IMR-90 (cell line): ENCODE measurements at regions of chr2 and their contacts with region 1.

Region 1: GRCh38 chr2:238370823-238371372 is 50.6 kb downstream of the TRAF3IP1 start:
- DNase-seq: peak; percentile 67
- ATAC-seq: peak; percentile 98
- H3K4me3 ChIP-seq: no peak overlapping the region
- H3K27ac ChIP-seq: no peak overlapping the region
- H3K4me1 ChIP-seq: no peaks in the 10 kb centered on the region
- H3K27me3 ChIP-seq: no peaks in the 10 kb centered on the region
- CTCF ChIP-seq: peak; percentile 96
- POLR2A ChIP-seq: peak; percentile 42; the same call in 1 of the 2 replicates
- RAD21 ChIP-seq: peak; percentile 97

Region 2: GRCh38 chr2:238462782-238463396 is 92.0 kb after region 1 on chr2:
- CTCF ChIA-PET with region 1: interaction called, 5 read pairs
- POLR2A ChIA-PET with region 1: no interaction called
- dilution Hi-C with region 1: no loop called
- in situ Hi-C with region 1: loop called (anchors 10 kb)
- intact Hi-C with region 1: loop called (anchors 2 kb)
- DNase-seq: peak; percentile 58
- ATAC-seq: peak; percentile 59; the same call in 1 of the 2 replicates
- H3K4me3 ChIP-seq: no peak overlapping the region
- H3K27ac ChIP-seq: no peak overlapping the region
- H3K4me1 ChIP-seq: peaks cover 7% of the 10 kb centered on the region
- H3K27me3 ChIP-seq: no peaks in the 10 kb centered on the region
- CTCF ChIP-seq: peak; percentile 76
- POLR2A ChIP-seq: no peak
- RAD21 ChIP-seq: peak; percentile 72

Region 3: GRCh38 chr2:238720232-238720672 is 349.4 kb after region 1 on chr2:
- CTCF ChIA-PET with region 1: no interaction called
- POLR2A ChIA-PET with region 1: interaction called, 3 read pairs
- dilution Hi-C with region 1: no loop called
- in situ Hi-C with region 1: no loop called
- intact Hi-C with region 1: loop called (anchors 10 kb)
- DNase-seq: peak; percentile 19
- ATAC-seq: peak; percentile 56; the same call in 1 of the 2 replicates
- H3K4me3 ChIP-seq: no peak overlapping the region
- H3K27ac ChIP-seq: no peak overlapping the region
- H3K4me1 ChIP-seq: no peaks in the 10 kb centered on the region
- H3K27me3 ChIP-seq: peaks cover 12% of the 10 kb centered on the region
- CTCF ChIP-seq: peak; percentile 46
- POLR2A ChIP-seq: no peak
- RAD21 ChIP-seq: peak; percentile 40

Region 4: DNA sequence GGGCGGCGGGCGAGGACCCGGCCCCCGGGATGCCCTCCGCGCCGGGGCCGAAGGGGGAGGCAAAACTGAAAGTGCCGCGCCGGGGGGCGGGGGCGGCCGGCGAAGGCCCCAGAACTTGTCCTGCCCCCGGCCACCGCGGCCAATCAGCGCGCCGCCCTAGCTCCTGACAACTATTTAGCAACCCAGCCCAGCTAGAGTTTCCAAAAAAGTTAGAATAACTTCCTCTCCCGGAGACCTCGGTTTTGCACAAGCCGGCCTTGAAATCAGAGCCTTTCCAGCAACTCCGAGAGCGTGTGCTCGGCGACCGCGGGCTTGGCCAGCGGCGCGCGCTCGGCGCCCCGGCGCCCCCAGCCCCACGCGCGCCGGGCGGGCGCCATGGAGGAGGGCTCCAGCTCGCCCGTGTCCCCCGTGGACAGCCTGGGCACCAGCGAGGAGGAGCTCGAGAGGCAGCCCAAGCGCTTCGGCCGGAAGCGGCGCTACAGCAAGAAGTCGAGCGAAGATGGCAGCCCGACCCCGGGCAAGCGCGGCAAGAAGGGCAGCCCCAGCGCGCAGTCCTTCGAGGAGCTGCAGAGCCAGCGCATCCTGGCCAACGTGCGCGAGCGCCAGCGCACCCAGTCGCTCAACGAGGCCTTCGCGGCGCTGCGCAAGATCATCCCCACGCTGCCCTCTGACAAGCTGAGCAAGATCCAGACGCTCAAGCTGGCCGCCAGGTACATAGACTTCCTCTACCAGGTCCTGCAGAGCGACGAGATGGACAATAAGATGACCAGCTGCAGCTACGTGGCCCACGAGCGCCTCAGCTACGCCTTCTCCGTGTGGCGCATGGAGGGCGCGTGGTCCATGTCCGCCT is 477.2 kb after region 1 on chr2 and contains the start of gene TWIST2:
- CTCF ChIA-PET with region 1: no interaction called
- POLR2A ChIA-PET with region 1: no interaction called
- dilution Hi-C with region 1: no loop called
- in situ Hi-C with region 1: no loop called
- intact Hi-C with region 1: loop called (anchors 5 kb)
- DNase-seq: peak; percentile 91
- ATAC-seq: peak; percentile 84
- H3K4me3 ChIP-seq: peak within 1 kb of the TSS; percentile 90
- H3K27ac ChIP-seq: peak within 1 kb of the TSS; percentile 95
- H3K4me1 ChIP-seq: peaks cover 17% of the 10 kb centered on the region
- H3K27me3 ChIP-seq: no peaks in the 10 kb centered on the region
- CTCF ChIP-seq: no peak; the same call in 1 of the 2 replicates
- POLR2A ChIP-seq: peak; percentile 79
- RAD21 ChIP-seq: no peak; the same call in 1 of the 2 replicates
- total RNA-seq, gene TWIST2: 9.3 and 14.7 TPM in 2 replicates

Region 5: DNA sequence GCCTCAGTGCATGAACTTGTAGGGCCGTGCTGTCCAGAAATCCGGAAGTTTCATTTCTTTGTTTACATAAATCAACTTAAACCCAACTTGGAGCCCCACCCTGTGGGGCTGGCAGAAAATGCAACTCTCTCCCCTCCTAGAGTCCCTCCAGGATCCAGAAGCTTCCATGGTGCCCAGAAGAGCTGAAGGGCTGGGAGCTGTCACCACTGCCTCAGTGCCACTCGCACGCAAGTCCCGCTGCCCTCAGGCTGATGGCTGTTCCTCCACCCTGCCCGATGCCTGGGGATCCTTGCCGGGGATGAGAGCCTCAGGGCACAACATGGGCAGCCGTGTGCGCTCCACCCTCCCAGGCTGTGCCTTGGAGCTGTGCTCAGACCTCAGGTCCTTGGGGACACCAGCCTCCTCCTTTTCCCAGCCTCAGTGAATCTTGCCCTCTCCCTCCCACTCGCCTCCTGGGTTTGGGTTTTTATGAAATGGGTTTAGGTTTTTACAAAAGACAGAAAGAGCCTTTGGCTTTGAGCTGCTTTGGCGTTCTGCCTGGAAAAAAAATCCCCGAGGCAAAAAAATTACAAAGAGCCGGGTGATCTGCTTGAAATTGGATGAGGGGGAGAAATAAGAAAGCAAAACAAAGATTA is 632.2 kb after region 1 on chr2:
- CTCF ChIA-PET with region 1: interaction called, 3 read pairs
- POLR2A ChIA-PET with region 1: no interaction called
- dilution Hi-C with region 1: no loop called
- in situ Hi-C with region 1: loop called (anchors 10 kb)
- intact Hi-C with region 1: loop called (anchors 5 kb)
- DNase-seq: peak; percentile 65
- ATAC-seq: peak; percentile 87
- H3K4me3 ChIP-seq: no peak overlapping the region
- H3K27ac ChIP-seq: no peak overlapping the region
- H3K4me1 ChIP-seq: peaks cover 3% of the 10 kb centered on the region; the same call in 1 of the 2 replicates
- H3K27me3 ChIP-seq: peaks cover 30% of the 10 kb centered on the region
- CTCF ChIP-seq: peak; percentile 64
- POLR2A ChIP-seq: no peak
- RAD21 ChIP-seq: peak; percentile 79